Right cardiac atrium (tissue), 5 donors: ENCODE measurements at regions of chr22 and their contacts with region 1.

Region 1: DNA sequence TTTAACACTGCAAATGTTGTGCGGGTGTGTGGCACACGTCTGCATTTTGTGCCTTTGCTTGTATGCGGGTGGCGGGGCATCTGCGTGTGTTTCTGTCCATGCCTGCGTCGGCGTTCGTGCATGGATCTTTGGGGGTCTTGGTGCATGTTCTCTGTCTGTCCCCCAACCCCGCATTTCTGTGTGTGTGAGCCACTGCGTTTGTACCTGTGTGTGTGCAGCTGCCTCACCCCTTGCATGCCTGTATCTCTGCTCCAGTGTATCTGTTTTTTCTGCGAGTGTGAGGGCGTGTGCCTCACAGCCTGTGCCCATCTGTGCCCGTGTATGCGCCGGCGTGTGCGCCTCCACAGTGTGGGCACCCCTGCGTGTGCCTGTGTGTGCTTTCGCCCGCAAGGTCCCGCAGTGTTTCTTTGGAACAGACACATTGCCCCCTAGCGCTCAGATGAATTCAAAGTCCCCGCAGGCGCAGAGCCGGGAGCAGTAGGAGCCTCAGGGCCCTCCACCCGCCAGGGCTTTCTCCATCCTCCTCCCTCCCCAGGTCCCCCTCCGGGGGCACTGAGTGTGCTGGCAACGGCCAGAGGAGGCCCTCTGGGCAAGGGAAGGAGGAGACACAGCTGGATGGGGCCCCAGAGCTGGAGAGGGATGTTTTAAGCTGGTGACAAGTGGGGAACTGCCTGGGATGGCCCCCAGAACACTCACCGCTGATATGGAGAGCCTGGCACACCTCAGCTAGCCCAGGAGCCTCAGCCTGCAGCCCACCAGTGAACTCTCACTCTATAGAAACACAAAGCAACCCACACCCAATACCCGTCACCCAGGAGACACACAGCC is 3.1 kb upstream of the MN1 start:
- DNase-seq: peak; percentile 71 to 89 (median 87)
- ATAC-seq: peak; percentile 48 to 63
- H3K4me3 ChIP-seq: no peak overlapping the region
- H3K27ac ChIP-seq: no peak overlapping the region
- H3K4me1 ChIP-seq: peaks cover 3% of the 10 kb centered on the region
- H3K27me3 ChIP-seq: no peaks in the 10 kb centered on the region

Region 2: DNA sequence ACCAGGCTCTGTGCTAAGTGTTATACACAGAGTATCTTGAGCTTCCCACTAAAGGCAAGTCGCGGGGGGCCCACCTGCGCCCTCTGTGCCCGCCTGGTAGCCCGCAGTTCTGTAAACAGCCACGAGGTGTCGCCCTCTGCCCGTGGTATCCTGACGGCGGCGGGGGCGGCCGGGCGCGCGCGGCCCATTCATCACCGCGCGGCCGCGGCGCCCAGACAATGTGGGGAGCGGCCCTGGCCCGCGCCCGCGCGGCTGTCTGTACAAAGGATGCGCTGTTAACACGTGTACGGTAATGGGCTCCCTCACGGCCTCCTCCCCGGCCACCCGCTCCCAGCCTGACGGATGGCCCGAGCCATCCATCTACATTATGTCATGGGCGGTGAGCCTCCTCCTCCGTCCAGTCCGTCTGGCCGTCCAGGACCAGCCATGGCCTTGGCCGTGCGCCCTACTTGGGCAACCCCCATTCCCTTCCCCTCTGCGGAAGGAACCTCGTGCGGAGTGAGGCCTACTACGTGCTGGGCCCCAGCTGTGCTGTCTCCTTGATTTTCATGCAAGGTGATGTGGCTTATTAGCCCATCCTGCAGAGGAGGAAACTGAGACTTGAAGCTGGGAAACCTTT is 1047.9 kb before region 1 on chr22:
- intact Hi-C with region 1: loop called (anchors 5 to 10 kb)
- DNase-seq: peak; percentile 68 to 88 (median 87)
- ATAC-seq: peak; percentile 85 to 92
- H3K4me3 ChIP-seq: no peak overlapping the region
- H3K27ac ChIP-seq: no peak overlapping the region
- H3K4me1 ChIP-seq: no peaks in the 10 kb centered on the region
- H3K27me3 ChIP-seq: no peaks in the 10 kb centered on the region

Region 3: GRCh38 chr22:26763633-26764361 is 1040.9 kb before region 1 on chr22:
- intact Hi-C with region 1: loop called (anchors 5 to 10 kb)
- DNase-seq: no peak
- ATAC-seq: no peak
- H3K4me3 ChIP-seq: no peak overlapping the region
- H3K27ac ChIP-seq: no peak overlapping the region
- H3K4me1 ChIP-seq: no peaks in the 10 kb centered on the region
- H3K27me3 ChIP-seq: no peaks in the 10 kb centered on the region

Region 4: GRCh38 chr22:27405672-27406388 is 398.9 kb before region 1 on chr22:
- intact Hi-C with region 1: loop called (anchors 5 kb)
- DNase-seq: peak; percentile 64 to 87 (median 84)
- ATAC-seq: peak; percentile 74 to 81
- H3K4me3 ChIP-seq: no peak overlapping the region
- H3K27ac ChIP-seq: no peak overlapping the region
- H3K4me1 ChIP-seq: no peaks in the 10 kb centered on the region
- H3K27me3 ChIP-seq: no peaks in the 10 kb centered on the region

Region 5: GRCh38 chr22:27637604-27638003 is 167.1 kb before region 1 on chr22:
- intact Hi-C with region 1: loop called in 1 of 4 experiments (anchors 5 kb)
- DNase-seq: no peak
- ATAC-seq: no peak
- H3K4me3 ChIP-seq: no peak overlapping the region
- H3K27ac ChIP-seq: peak overlapping the region; percentile 60
- H3K4me1 ChIP-seq: peaks cover 5% of the 10 kb centered on the region
- H3K27me3 ChIP-seq: no peaks in the 10 kb centered on the region

Region 6: GRCh38 chr22:27748751-27749191 is 55.9 kb before region 1 on chr22:
- intact Hi-C with region 1: no loop called
- DNase-seq: no peak
- ATAC-seq: peak; percentile 53 to 60
- H3K4me3 ChIP-seq: no peak overlapping the region
- H3K27ac ChIP-seq: peak overlapping the region; percentile 92
- H3K4me1 ChIP-seq: peaks cover 12% of the 10 kb centered on the region
- H3K27me3 ChIP-seq: no peaks in the 10 kb centered on the region